HCT116 (cell line): ENCODE measurements at regions of chr10 and their contacts with region 1.

Region 1: GRCh38 chr10:91694170-91694794 is 61.4 kb upstream of the PPP1R3C start:
- DNase-seq: peak; percentile 42
- ATAC-seq: peak; percentile 85
- H3K4me3 ChIP-seq: no peak overlapping the region
- H3K27ac ChIP-seq: no peak overlapping the region
- H3K4me1 ChIP-seq: no peaks in the 10 kb centered on the region
- H3K27me3 ChIP-seq: no peaks in the 10 kb centered on the region
- CTCF ChIP-seq: peak; percentile 77 to 88 (median 80); a peak in 5 of 6 replicates
- POLR2A ChIP-seq: no peak
- RAD21 ChIP-seq: peak; percentile 80

Region 2: DNA sequence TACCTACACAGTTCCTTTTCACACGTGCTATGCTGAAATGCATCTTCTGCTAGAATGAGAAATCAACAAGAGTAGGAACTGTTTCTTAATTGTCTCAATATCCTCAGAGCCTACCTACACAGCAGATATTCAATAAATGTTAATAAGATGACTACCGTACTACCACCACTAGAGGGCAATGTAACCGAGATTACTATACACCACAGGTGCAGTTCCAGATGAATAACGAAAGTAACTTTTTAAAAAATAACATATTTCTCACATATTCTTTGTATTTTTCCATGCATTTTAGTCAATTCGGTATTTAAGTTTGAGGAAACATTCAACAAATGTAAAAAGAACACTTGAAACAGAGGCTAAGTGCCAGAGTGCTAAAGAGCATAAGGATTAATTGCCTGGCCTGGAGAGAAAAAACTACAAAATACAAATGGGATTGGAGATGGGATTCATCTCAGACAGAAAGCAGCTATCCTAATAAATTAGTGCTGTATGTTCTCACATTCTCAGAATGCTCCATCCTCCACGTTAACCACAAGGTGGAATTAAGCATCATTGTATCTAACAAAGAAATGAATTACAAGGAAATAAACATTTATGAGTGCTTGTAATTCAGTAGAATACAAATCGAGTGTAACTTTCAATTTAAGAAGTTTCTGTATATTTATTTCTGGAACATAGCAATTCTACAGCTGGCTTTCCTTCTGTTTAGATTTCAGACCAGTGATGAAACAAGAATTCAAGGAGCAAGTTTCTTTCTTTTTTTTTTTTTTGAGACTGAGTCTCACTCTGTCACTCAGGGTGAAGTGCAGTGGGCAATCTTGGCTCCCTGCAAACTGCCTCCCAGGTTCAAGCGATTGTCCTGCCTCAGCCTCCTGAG is 304.4 kb before region 1 on chr10:
- CTCF ChIA-PET with region 1: no interaction called
- POLR2A ChIA-PET with region 1: no interaction called
- RAD21 ChIA-PET with region 1: no interaction called
- intact Hi-C with region 1: loop called (anchors 1 kb)
- DNase-seq: peak; percentile 37
- ATAC-seq: peak; percentile 84
- H3K4me3 ChIP-seq: peak overlapping the region in 1 of 2 experiments; percentile 12; a peak in 1 of 4 replicates
- H3K27ac ChIP-seq: no peak overlapping the region
- H3K4me1 ChIP-seq: peaks cover 0 to 3% of the 10 kb centered on the region in 2 experiments; a peak in 1 of 4 replicates
- H3K27me3 ChIP-seq: peaks cover 21% of the 10 kb centered on the region
- CTCF ChIP-seq: peak; percentile 44 to 65 (median 65); a peak in 5 of 6 replicates
- POLR2A ChIP-seq: no peak
- RAD21 ChIP-seq: peak; percentile 65

Region 3: DNA sequence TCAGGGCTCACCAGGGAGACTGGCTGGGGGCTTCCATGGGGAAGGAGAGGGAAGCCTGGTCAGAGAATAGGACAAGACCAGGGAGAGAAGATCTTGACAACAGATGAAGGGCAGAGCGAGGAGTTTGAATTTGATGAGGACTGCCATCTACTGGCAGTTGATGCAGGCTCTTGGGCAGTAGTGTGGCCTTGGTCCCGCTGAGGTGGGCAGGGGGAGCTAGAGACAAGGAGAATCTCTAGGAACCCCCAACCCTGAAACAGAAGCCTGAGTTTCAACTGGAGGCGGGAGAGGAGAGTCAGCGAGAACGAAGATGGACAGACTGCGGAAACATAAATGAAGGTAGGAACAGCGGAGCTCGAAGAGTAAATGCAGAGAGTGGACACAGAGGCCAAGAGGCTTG is 142.4 kb before region 1 on chr10:
- CTCF ChIA-PET with region 1: interaction called, 4 read pairs
- POLR2A ChIA-PET with region 1: no interaction called
- RAD21 ChIA-PET with region 1: no interaction called
- intact Hi-C with region 1: loop called (anchors 2 kb)
- DNase-seq: peak; percentile 16
- ATAC-seq: peak; percentile 84
- H3K4me3 ChIP-seq: no peak overlapping the region
- H3K27ac ChIP-seq: no peak overlapping the region
- H3K4me1 ChIP-seq: no peaks in the 10 kb centered on the region
- H3K27me3 ChIP-seq: no peaks in the 10 kb centered on the region
- CTCF ChIP-seq: peak; percentile 62 to 97 (median 71)
- POLR2A ChIP-seq: no peak
- RAD21 ChIP-seq: peak; percentile 84

Region 4: GRCh38 chr10:91643700-91644099 is 50.6 kb before region 1 on chr10:
- CTCF ChIA-PET with region 1: interaction called, 16 read pairs
- POLR2A ChIA-PET with region 1: no interaction called
- RAD21 ChIA-PET with region 1: interaction called in 1 of 2 experiments, 3 read pairs
- intact Hi-C with region 1: loop called (anchors 5 kb)
- DNase-seq: no peak
- ATAC-seq: peak; percentile 69
- H3K4me3 ChIP-seq: no peak overlapping the region
- H3K27ac ChIP-seq: no peak overlapping the region
- H3K4me1 ChIP-seq: no peaks in the 10 kb centered on the region
- H3K27me3 ChIP-seq: no peaks in the 10 kb centered on the region
- CTCF ChIP-seq: peak; percentile 35 to 50 (median 41); a peak in 5 of 6 replicates
- POLR2A ChIP-seq: no peak
- RAD21 ChIP-seq: peak; percentile 60

Region 5: GRCh38 chr10:91711885-91712680 is 17.8 kb after region 1 on chr10:
- CTCF ChIA-PET with region 1: no interaction called
- POLR2A ChIA-PET with region 1: no interaction called
- RAD21 ChIA-PET with region 1: no interaction called
- intact Hi-C with region 1: no loop called
- DNase-seq: no peak
- ATAC-seq: no peak
- H3K4me3 ChIP-seq: no peak overlapping the region
- H3K27ac ChIP-seq: no peak overlapping the region
- H3K4me1 ChIP-seq: no peaks in the 10 kb centered on the region
- H3K27me3 ChIP-seq: no peaks in the 10 kb centered on the region
- CTCF ChIP-seq: no peak
- POLR2A ChIP-seq: no peak
- RAD21 ChIP-seq: no peak

Region 6: GRCh38 chr10:91758303-91759146 is 64.2 kb after region 1 on chr10:
- CTCF ChIA-PET with region 1: no interaction called
- POLR2A ChIA-PET with region 1: no interaction called
- RAD21 ChIA-PET with region 1: no interaction called
- intact Hi-C with region 1: no loop called
- DNase-seq: peak; percentile 65
- ATAC-seq: peak; percentile 86
- H3K4me3 ChIP-seq: no peak overlapping the region
- H3K27ac ChIP-seq: no peak overlapping the region
- H3K4me1 ChIP-seq: no peaks in the 10 kb centered on the region
- H3K27me3 ChIP-seq: no peaks in the 10 kb centered on the region
- CTCF ChIP-seq: peak; percentile 46 to 77 (median 75)
- POLR2A ChIP-seq: no peak
- RAD21 ChIP-seq: peak; percentile 93

Region 7: DNA sequence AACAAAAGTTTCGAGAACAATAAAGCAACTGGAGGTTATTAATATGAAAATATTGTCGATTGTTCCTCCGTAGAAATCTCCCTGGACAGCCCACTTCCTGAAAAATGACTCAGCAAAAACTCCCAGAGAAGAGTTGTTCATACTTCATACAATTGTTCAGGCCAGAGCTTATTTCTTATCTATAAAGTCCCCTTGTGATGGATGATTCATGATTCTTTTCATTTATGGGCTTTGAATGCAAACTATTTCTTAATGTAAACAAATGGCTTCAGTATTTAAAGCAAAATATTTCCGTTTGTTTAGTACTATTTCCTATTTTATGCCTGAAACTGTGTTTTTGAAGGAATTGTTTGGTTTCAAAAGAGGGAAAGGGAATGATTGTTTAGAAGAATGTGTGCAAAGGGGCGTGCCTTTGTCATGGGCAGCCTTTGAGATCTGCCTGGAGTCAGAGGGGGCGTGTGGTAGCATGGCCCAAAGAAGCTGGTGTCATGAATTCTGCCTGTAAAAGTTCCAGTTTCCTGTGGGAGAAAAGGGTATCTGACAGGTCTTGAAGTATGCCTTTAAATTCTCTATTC is 1127.9 kb after region 1 on chr10:
- CTCF ChIA-PET with region 1: no interaction called
- POLR2A ChIA-PET with region 1: no interaction called
- RAD21 ChIA-PET with region 1: no interaction called
- intact Hi-C with region 1: no loop called
- DNase-seq: no peak
- ATAC-seq: no peak
- H3K4me3 ChIP-seq: no peak overlapping the region
- H3K27ac ChIP-seq: no peak overlapping the region
- H3K4me1 ChIP-seq: peaks cover 0 to 11% of the 10 kb centered on the region in 2 experiments; a peak in 2 of 4 replicates
- H3K27me3 ChIP-seq: no peaks in the 10 kb centered on the region
- CTCF ChIP-seq: no peak
- POLR2A ChIP-seq: no peak
- RAD21 ChIP-seq: no peak